ENCODE measurements at regions of chr6 and their contacts with region 1.

Region 1: DNA sequence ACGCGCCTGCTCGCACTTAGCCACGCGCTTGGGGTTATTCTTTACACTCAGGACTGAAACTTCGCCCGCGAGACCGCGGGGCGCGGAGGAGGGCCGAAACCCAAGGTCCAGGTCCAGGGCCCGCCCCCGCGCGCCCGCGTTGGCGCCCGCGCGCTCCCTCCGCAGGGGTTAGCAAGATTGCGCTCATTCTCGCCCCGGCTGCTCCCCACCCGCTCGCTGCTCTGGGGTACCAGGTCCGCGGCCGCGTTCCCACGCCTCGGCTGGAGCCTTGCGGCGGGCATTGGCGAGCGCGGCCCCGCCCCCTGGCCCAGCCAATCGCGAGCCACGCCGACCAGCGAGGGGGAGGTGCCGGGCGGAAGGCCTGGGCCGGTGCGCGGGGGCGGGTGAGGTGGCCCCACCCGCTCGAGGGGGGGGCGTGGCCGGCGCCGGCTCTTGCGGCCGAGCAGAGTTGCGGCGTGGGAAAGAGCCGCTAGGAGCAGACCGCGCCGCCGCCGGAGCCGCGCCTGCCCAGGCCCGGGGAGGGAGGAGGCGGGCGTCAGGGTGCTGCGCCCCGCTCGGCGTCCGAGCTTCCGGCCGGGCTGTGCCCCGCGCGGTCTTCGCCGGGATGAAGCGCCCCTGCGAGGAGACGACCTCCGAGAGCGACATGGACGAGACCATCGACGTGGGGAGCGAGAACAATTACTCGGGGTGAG is at the start of gene HEY2:
- DNase-seq: peak; percentile 97
- CTCF ChIP-seq: no peak

Region 2: DNA sequence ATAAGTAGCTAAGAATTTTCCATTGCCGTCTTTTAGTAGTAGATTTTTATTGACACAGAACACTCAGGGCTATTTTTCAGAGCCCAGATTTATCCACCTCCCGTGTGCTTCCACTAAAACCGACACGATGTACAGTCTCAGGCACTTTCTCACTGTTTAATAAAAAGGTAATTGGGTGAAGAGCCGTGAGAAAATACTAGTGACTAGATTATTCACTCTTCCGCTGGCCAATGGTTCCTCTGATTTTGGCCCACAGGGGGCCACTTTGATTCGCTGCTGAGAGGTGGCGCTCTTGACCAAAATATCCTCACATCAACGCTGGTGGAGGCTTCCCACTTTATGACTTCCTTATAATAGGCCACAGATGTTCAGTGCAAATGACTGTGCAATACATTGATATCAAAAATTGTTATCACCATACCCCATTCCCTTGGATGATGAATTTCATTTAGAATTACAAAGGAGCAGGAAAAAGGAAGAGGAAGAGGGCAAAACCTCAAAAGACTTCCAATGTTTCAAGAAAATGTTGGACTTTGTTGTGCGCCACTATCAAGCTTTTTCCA is 435.2 kb before region 1 on chr6:
- CTCF ChIA-PET with region 1: interaction called, 318 read pairs
- POLR2A ChIA-PET with region 1: no interaction called
- DNase-seq: peak; percentile 41
- CTCF ChIP-seq: peak; percentile 85

Region 3: DNA sequence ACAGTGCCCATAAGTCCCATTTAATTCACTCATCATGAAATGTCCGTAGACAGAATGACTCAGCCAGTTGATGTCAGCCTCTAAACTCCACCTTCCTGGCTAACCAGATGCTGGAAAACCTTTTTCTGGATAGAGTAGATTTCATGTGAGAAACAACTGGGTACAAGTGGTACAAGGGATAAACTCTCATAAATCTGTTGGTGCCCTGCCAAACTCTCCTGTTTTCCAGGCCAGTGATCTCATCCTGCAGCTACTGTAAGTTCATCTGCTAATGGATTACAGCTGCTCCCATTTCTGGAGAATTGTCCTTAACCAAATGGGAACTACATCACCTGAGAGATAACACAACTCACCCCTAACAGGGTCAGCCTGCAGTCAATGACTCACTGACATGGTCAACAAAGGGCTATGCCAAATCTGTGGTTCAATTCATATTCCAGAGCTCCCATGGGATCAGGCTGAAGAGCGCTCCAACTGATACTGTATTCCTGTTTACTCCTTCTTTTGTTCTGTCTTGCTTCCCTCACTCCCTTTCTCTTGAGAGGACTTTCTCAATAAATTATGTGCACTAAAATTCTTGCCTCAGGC is 237.4 kb before region 1 on chr6:
- CTCF ChIA-PET with region 1: interaction called, 15 read pairs
- POLR2A ChIA-PET with region 1: no interaction called
- DNase-seq: no peak
- CTCF ChIP-seq: no peak

Region 4: DNA sequence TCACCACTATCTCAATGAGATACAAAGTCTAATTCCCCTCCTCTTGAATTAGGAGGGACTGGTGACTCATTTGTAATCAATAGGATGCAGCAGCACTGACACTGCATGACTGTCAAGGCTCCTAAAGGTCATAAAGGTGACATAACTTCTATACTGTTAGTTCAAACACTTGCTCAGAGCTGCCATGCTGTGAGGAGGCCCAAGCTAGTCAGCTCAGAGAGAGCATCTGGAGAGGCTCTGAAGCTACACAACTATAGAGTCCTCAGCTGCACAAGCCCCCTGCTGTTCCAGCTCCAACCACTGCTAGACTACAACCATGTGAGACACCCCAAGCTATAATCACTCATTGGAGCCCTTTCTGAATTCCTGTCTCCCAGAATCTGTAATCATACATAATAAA is 16.9 kb before region 1 on chr6:
- CTCF ChIA-PET with region 1: no interaction called
- POLR2A ChIA-PET with region 1: no interaction called
- DNase-seq: no peak
- CTCF ChIP-seq: no peak

Region 5: GRCh38 chr6:125759184-125759902 is 10.0 kb after region 1 on chr6:
- CTCF ChIA-PET with region 1: interaction called, 18 read pairs
- POLR2A ChIA-PET with region 1: no interaction called
- DNase-seq: no peak
- CTCF ChIP-seq: no peak

Region 6: GRCh38 chr6:125769147-125769783 is 19.9 kb after region 1 on chr6:
- CTCF ChIA-PET with region 1: interaction called, 12 read pairs
- POLR2A ChIA-PET with region 1: no interaction called
- DNase-seq: no peak
- CTCF ChIP-seq: no peak